A673 (cell line): ENCODE measurements at regions of chr3 and their contacts with region 1.

Region 1: DNA sequence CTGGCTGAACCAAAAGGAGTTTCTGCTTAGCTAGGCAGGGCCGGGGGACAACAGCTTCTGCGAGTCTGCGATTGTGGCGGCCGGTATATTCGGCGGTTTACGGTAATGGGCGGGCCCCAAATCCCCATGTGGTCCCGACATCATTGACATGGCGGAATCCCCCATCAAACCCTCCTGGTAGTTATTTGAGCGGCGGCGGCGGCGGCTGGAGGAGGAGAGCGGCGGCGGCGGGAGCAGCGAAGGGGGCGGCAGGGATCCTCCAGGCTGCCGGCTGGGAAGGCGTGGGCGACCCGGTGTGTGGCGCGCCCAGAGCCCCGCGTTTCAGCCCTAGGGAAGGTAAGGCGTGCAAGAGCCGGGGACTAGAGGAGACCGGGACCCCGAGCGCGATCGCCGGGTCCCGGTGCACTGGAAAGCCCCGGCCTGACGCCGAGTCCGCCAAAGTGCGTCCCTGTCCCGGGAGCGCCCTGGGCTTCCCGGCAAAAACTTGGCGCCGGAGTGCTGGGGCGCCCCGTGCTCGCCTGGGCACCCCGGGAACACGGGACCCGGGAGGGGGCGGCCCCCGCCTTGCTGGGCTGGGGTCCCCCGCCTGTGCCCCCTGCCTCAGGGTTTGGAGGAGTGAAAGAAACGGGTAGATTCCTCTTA is at the start of gene FNDC3B:
- DNase-seq: peak; percentile 97
- H3K4me3 ChIP-seq: peak within 1 kb of the TSS; percentile 97
- H3K27ac ChIP-seq: peak within 1 kb of the TSS; percentile 93
- H3K4me1 ChIP-seq: peaks cover 18% of the 10 kb centered on the region
- H3K27me3 ChIP-seq: no peaks in the 10 kb centered on the region
- CTCF ChIP-seq: no peak
- total RNA-seq, gene FNDC3B: 43.2 and 50.8 TPM in 2 replicates

Region 2: DNA sequence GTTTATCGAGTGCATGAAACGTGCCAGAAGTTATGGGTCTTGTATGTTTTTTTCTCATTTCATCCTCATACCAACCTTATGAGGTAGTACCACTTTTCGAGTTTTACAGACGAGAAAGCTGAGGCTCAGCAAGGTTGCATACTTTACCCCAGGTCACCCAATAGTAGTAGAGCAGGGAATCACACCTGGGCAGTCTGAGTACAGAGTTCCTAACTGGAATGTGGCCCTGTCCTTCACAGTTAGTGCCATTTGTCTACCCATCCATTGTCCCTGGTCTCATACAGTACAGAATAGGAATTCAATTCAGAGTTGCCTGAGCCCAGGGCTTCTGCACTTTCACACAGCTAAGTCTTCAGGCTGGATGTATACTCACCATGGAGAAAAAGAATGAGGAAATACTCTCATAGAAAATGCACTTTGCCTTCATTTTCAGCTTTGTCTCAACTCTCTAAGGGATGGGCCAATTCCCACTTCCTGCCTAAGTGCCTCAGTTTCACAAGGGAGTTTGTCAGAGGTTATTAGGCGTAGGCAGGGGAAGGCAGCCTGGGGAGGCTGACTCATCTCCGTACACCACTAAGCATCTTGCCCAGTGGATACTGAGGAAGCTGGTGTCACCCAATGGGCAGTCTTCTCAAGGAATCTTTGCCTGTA is 103.2 kb before region 1 on chr3:
- CTCF ChIA-PET with region 1: no interaction called
- POLR2A ChIA-PET with region 1: no interaction called
- intact Hi-C with region 1: loop called (anchors 5 kb)
- DNase-seq: peak; percentile 61
- H3K4me3 ChIP-seq: no peak overlapping the region
- H3K27ac ChIP-seq: no peak overlapping the region
- H3K4me1 ChIP-seq: no peaks in the 10 kb centered on the region
- H3K27me3 ChIP-seq: no peaks in the 10 kb centered on the region
- CTCF ChIP-seq: no peak

Region 3: DNA sequence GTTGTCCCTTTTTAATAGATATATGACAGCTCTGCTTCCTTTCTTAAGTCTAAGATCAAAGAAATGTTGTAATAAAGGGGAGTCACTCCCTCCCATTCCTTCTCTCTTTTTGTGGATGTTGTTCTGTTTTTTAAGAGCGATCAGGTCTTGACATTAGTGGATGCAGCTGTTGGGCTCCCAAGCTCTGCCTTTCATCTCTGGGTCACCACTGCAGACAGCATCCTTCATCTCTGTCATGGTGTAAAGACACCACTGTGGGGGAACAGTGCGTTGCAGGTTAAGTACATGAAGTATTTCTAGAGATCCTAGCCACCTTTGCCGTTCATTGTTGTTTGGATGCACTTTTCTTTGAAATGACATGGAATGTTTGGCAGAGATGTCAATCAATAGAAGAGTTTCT is 17.5 kb after region 1 on chr3:
- CTCF ChIA-PET with region 1: no interaction called
- POLR2A ChIA-PET with region 1: interaction called, 17 read pairs
- intact Hi-C with region 1: no loop called
- DNase-seq: no peak
- H3K4me3 ChIP-seq: no peak overlapping the region
- H3K27ac ChIP-seq: no peak overlapping the region
- H3K4me1 ChIP-seq: peaks cover 27% of the 10 kb centered on the region
- H3K27me3 ChIP-seq: no peaks in the 10 kb centered on the region
- CTCF ChIP-seq: no peak

Region 4: DNA sequence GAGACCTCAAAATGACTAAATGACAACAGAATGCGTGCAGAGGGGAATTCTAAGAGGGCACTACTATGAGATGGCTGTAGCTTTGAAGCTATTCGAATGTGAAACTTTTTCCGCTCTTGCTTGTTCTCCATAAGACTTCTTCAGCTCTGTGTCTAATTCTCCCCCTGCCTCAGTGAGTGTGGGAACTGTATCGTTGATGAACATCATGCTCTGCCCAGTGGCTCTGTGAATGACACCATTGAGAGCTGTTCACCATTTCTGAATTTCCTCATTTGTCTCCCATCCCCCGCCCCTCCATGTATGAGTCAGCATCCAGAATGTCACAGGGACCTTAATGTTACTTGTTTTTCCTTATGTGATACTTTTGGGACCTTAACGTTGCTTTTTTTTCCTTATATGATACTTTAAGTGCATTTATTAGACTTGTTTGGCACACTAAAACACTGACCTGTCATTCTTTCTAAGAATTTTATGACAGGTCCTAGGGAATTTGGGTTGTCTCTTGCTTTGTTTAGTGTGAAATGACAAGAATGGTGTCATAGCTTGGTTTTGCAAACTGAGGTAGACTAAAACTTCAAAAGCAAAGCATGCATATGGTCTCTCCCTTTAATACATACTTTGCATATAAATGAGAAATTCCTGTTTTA is 99.4 kb after region 1 on chr3:
- CTCF ChIA-PET with region 1: no interaction called
- POLR2A ChIA-PET with region 1: no interaction called
- intact Hi-C with region 1: loop called (anchors 2 kb)
- DNase-seq: peak; percentile 63
- H3K4me3 ChIP-seq: no peak overlapping the region
- H3K27ac ChIP-seq: peak overlapping the region; percentile 77
- H3K4me1 ChIP-seq: peaks cover 80% of the 10 kb centered on the region
- H3K27me3 ChIP-seq: no peaks in the 10 kb centered on the region
- CTCF ChIP-seq: no peak